ENCODE measurements at regions of chr22 and their contacts with region 1.

Region 1: GRCh38 chr22:42614312-42615091 is at the start of gene POLDIP3:
- DNase-seq: peak; percentile 98
- H3K4me3 ChIP-seq: peak within 1 kb of the TSS; percentile 62 to 98 (median 94)
- H3K27ac ChIP-seq: peak within 1 kb of the TSS; percentile 98
- H3K4me1 ChIP-seq: peaks cover 5 to 10% (median 9%) of the 10 kb centered on the region in 4 experiments
- H3K27me3 ChIP-seq: no peaks in the 10 kb centered on the region
- CTCF ChIP-seq: peak in 1 of 3 experiments; percentile 32; a peak in 1 of 4 replicates
- EP300 ChIP-seq: no peak
- POLR2A ChIP-seq: no peak; a peak in 1 of 3 replicates
- RAD21 ChIP-seq: no peak
- total RNA-seq, gene POLDIP3: 77.3 and 84.6 TPM in 2 replicates

Region 2: GRCh38 chr22:42283278-42284201 is 331.0 kb before region 1 on chr22:
- CTCF ChIA-PET with region 1: no interaction called
- POLR2A ChIA-PET with region 1: no interaction called
- DNase-seq: peak in 1 of 2 experiments; percentile 71
- H3K4me3 ChIP-seq: peak overlapping the region; percentile 4 to 56 (median 38)
- H3K27ac ChIP-seq: no peak overlapping the region
- H3K4me1 ChIP-seq: peaks cover 0 to 17% (median 11%) of the 10 kb centered on the region in 4 experiments; a peak in 6 of 7 replicates
- H3K27me3 ChIP-seq: peaks cover 0 to 55% (median 39%) of the 10 kb centered on the region in 4 experiments; a peak in 6 of 7 replicates
- CTCF ChIP-seq: no peak
- EP300 ChIP-seq: no peak
- POLR2A ChIP-seq: no peak
- RAD21 ChIP-seq: no peak

Region 3: DNA sequence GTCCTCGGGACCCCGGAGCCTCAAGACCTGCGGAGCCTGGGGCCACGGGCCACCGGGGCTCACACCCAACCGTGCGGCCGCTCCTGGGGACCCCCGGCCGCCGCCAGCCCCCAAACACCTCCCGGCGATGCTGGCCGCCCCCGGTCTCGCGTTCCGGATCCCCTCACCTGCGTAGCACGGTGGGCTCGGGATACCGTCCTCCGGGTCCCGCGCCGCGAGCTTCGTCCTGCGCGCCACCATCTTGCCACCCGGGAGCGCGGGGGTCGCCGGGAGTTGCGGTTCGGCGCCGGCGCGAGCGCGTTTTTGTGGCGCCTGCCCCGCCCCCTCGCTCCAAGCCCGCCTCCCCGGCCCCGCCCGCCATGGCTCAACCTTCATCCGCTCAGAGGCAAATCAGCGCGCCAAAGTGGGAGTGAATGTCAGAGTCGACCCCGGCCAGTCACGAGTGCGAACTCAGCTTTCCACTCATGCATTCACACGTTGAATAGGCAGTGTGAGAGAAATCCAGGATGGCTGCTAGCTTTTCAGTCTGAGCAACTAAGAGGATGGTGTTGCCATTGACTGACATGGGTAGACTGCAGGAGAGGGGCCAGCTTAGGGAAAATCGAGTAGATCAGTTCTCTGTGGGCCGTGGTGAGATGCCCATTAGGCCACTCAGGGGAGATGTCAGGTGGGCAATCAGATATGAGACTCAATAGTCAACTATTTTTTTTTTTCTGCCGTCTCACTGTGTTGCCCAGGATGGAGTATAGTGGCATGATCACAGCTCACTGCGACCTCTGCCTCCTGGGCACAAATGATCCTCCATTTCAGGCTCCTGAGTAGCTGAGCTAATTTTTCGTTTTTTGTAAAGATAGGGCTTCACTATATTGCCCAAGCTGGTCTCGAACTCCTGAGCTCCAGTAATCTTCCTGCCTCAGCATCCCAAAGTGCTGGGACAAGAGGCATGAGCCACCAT is 32.5 kb before region 1 on chr22:
- CTCF ChIA-PET with region 1: interaction called, 5 read pairs
- POLR2A ChIA-PET with region 1: interaction called, 399 read pairs
- DNase-seq: peak; percentile 7 to 88
- H3K4me3 ChIP-seq: peak overlapping the region; percentile 67 to 89 (median 71)
- H3K27ac ChIP-seq: peak overlapping the region; percentile 85; the same call in 1 of the 2 replicates
- H3K4me1 ChIP-seq: no peaks in the 10 kb centered on the region
- H3K27me3 ChIP-seq: no peaks in the 10 kb centered on the region
- CTCF ChIP-seq: no peak
- EP300 ChIP-seq: no peak
- POLR2A ChIP-seq: peak; percentile 74 to 87
- RAD21 ChIP-seq: no peak

Region 4: GRCh38 chr22:42649246-42650099 is 35.0 kb after region 1 on chr22 and contains the start of gene CYB5R3:
- CTCF ChIA-PET with region 1: interaction called, 3 read pairs
- POLR2A ChIA-PET with region 1: interaction called, 74 read pairs
- DNase-seq: peak; percentile 50 to 90
- H3K4me3 ChIP-seq: peak within 1 kb of the TSS; percentile 82 to 98 (median 90)
- H3K27ac ChIP-seq: peak within 1 kb of the TSS; percentile 82; the same call in 1 of the 2 replicates
- H3K4me1 ChIP-seq: peaks cover 3 to 15% (median 11%) of the 10 kb centered on the region in 4 experiments
- H3K27me3 ChIP-seq: no peaks in the 10 kb centered on the region; a peak in 1 of 7 replicates
- CTCF ChIP-seq: no peak
- EP300 ChIP-seq: 0 out of 3 replicates have a peak, but pooled peaks of 1 of the 2 experiments have one; percentile 16
- POLR2A ChIP-seq: peak in 1 of 2 experiments; percentile 77; a peak in 2 of 3 replicates
- RAD21 ChIP-seq: no peak
- total RNA-seq, gene CYB5R3: 75.3 and 82.5 TPM in 2 replicates

Region 5: GRCh38 chr22:42856865-42857704 is 242.6 kb after region 1 on chr22 and contains the start of gene ARFGAP3:
- CTCF ChIA-PET with region 1: interaction called, 5 read pairs
- POLR2A ChIA-PET with region 1: interaction called, 10 read pairs
- DNase-seq: peak; percentile 66 to 96
- H3K4me3 ChIP-seq: peak within 1 kb of the TSS; percentile 65 to 97 (median 82)
- H3K27ac ChIP-seq: no peak within 1 kb of the TSS
- H3K4me1 ChIP-seq: peaks cover 0 to 3% (median 1%) of the 10 kb centered on the region in 4 experiments; a peak in 2 of 7 replicates
- H3K27me3 ChIP-seq: peaks cover 7 to 20% (median 11%) of the 10 kb centered on the region in 4 experiments
- CTCF ChIP-seq: no peak
- EP300 ChIP-seq: no peak
- POLR2A ChIP-seq: no peak
- RAD21 ChIP-seq: peak in 1 of 2 experiments; percentile 12; a peak in 1 of 4 replicates
- total RNA-seq, gene ARFGAP3: 15.8 and 16.0 TPM in 2 replicates

Measured in H1 (cell line).